CD4-positive, alpha-beta memory T cell (primary cell): ENCODE measurements at regions of chr3 and their contacts with region 1.

Region 1: DNA sequence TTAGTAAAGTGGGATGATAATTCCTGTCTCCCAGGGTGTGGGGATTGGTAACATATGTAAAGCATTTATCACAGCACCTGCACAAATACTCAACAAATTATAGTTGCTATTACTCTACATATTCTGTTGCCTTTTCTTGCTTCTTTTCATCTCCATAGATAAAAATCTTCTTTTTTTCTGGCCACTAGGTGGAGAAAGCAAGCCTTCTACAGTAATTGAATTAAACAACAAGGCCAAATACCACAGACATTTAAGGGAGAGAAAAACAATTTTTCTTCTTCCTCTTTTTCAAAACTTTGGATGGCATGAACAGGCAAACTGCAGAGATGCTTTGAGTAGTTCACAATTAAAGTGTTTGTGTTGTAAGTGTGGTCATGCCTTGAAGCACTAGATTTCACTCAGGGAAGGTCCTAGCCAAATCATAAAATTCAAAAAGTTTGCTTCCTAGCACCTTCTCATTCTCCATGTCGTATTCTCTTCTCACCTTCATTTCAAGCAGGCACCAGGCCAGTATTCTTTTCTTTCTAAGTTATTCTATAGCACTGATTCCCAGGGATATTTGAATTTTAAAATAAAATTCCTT is 493.4 kb upstream of the TGFBR2 start:
- DNase-seq: peak in 4 of 5 donors; percentile 29 to 37 (median 34)
- H3K4me3 ChIP-seq: no peak overlapping the region
- H3K4me3 Mint-ChIP-seq: no peak overlapping the region
- H3K27ac ChIP-seq: no peak overlapping the region
- H3K27ac Mint-ChIP-seq: no peak overlapping the region
- H3K4me1 ChIP-seq: no peaks in the 10 kb centered on the region
- H3K4me1 Mint-ChIP-seq: no peaks in the 10 kb centered on the region
- H3K27me3 ChIP-seq: no peaks in the 10 kb centered on the region
- H3K27me3 Mint-ChIP-seq: peaks cover 2 to 5% of the 10 kb centered on the region in 2 donors

Region 2: DNA sequence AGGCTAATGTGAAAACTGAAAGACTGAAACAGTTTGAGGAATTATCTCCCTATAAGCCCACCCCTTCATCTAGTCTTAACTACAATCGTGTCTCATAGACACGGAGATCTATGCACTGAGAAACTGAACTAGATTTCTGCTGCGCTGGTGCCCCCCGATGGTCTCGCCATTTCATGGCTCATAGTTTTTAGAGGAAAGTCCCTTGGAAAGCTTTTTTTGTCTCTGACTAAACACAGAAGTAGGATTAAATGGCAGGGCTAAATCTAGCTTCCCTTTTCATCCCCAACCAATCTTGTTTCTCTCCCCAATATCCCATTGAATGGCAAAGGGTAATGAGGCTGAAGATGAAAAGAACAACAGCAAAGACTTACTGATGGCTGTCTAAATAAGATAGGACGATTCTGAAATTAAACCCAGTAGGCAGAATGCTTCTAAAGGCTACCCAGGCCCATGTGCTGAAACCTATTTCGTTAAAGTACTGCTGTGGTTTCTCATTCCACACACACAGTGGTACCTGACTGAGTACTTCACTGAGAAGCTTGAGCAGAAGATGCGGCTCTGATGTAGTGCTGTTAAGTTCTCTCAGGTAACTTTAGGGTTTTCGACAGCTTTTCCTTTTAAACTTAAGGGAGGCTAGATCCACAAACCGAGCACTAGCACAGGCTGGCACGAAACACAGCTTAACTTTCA is 638.8 kb after region 1 on chr3:
- CTCF ChIA-PET with region 1: interaction called, 8 read pairs
- POLR2A ChIA-PET with region 1: no interaction called
- intact Hi-C with region 1: loop called (anchors 1 kb)
- DNase-seq: peak in 4 of 5 donors; percentile 29 to 33 (median 30)
- H3K4me3 ChIP-seq: no peak overlapping the region
- H3K4me3 Mint-ChIP-seq: no peak overlapping the region
- H3K27ac ChIP-seq: no peak overlapping the region
- H3K27ac Mint-ChIP-seq: no peak overlapping the region
- H3K4me1 ChIP-seq: no peaks in the 10 kb centered on the region
- H3K4me1 Mint-ChIP-seq: peaks cover 0 to 1% (median 0%) of the 10 kb centered on the region in 4 donors
- H3K27me3 ChIP-seq: no peaks in the 10 kb centered on the region
- H3K27me3 Mint-ChIP-seq: peaks cover 7 to 8% of the 10 kb centered on the region in 2 donors

Region 3: DNA sequence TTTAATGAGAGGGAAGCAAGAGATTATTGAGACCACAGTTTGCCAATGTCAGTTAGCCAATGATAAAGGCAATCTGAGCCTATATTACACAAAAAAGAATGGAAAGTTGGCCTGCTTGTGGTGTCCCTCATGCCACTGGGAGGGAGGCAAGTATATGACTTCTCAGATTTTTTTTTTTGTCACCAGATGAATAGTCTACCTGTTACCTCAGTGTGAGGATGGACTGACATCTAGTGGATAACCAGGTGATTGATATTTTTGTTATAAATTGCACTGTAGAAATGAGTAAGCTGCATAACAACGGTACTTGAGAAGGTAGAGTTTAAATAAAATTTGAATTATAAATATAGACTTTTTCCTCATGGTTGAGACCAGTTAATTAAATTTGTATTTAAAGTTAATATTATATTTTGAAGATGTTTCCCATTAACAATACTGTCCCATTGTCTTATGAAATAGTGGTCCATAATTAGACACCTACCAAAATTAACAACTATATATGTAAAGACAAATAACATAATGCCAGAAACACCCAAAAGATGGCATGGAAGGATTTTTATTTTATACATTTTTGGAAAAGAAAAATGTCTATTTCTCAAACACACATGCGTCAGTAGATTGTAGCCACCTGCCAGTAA is 1019.3 kb after region 1 on chr3:
- CTCF ChIA-PET with region 1: no interaction called
- POLR2A ChIA-PET with region 1: no interaction called
- intact Hi-C with region 1: loop called (anchors 2 kb)
- DNase-seq: peak in 4 of 5 donors; percentile 37 to 47 (median 44)
- H3K4me3 ChIP-seq: no peak overlapping the region
- H3K4me3 Mint-ChIP-seq: no peak overlapping the region
- H3K27ac ChIP-seq: no peak overlapping the region
- H3K27ac Mint-ChIP-seq: no peak overlapping the region
- H3K4me1 ChIP-seq: no peaks in the 10 kb centered on the region
- H3K4me1 Mint-ChIP-seq: peaks cover 0 to 6% (median 1%) of the 10 kb centered on the region in 4 donors
- H3K27me3 ChIP-seq: no peaks in the 10 kb centered on the region
- H3K27me3 Mint-ChIP-seq: no peaks in the 10 kb centered on the region